Right ventricle myocardium inferior (tissue), 1 donor: ENCODE measurements at regions of chr20 and their contacts with region 1.

Region 1: GRCh38 chr20:1802385-1803060 is 92.7 kb upstream of the SIRPA start:
- DNase-seq: peak; percentile 91
- ATAC-seq: peak; percentile 80

Region 2: DNA sequence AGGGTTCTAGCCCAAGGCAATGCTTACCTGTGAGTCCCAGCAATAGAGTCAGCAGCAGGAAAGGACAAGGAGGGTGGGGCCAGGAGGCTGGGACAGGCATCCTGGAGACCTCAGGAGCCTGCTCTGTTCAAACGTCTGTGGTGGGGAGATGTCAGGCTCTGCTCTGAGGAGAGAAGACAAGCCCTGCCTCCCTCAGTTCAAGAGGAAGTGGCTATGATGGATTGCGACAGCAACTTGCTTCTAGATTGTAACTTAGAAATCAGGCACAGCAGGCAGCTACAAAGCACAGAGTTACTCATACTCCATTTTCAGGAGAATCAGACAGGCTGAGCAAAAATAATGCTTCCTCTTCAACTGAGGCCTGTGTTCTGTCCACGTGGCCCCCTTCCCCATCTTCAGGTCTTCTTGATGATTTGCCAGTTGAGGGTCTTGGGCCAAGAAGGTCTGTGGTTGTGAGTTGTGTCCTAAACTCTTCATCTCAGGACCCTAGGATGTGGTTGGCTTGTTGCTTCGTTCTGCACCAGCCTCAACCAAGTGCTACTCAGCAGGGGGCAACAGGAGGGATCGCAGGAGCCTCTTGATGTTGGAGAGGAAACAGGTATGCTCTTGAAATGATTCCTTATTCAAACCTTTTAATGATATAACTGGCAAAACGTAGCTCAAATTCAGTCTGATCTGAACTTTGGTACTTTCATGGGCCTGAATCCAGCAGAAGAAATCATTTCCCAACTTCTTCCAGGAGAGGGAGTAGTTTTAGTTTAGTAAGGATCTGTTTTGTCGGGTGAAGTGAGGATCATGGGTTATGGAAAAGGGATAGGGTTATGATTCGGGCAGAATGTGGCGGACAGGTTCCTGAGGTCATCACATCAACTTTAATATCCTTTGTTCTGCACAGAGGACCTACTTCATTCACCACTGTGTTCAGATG is 213.7 kb before region 1 on chr20:
- intact Hi-C with region 1: no loop called
- DNase-seq: no peak
- ATAC-seq: no peak

Region 3: GRCh38 chr20:1881240-1881835 is 78.8 kb after region 1 on chr20:
- intact Hi-C with region 1: loop called (anchors 2 kb)
- DNase-seq: no peak
- ATAC-seq: peak; percentile 65

Region 4: DNA sequence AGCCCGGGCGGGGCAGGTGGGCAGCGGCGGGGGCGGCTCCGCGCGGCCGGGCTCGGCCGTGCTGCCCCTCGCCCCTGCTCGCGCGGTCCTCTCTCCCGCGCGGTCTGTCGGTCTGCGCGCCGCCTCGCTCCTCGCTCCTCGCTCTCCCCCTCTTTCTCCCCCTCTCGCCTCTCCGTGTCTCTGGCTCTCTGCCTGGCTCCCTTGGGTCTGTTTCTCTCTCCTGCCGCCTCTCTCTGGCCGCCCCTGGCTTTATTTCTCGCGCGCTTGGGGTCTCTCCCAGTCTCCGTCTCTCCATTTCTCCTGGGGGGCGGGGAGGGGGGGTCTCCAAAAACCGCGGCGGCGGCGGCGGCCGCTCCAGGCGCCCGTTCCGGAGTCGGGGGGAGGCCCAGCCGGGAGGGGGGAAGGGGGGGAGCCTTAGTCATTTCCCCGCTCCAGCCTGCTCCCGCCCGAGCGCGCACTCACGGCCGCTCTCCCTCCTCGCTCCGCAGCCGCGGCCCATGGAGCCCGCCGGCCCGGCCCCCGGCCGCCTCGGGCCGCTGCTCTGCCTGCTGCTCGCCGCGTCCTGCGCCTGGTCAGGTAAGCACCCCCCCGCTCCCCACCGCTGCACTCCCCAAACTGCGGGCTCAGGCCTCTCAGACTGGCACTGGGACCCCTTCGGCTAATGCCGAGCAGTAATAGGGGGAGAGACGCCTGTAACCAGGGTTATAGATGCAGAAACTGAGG is 92.6 kb after region 1 on chr20 and contains the start of gene SIRPA:
- intact Hi-C with region 1: loop called (anchors 2 kb)
- DNase-seq: peak; percentile 83
- ATAC-seq: peak; percentile 61
- total RNA-seq, gene SIRPA: 20.9 TPM